Endothelial cell of umbilical vein (primary cell): ENCODE measurements at regions of chr10 and their contacts with region 1.

Region 1: DNA sequence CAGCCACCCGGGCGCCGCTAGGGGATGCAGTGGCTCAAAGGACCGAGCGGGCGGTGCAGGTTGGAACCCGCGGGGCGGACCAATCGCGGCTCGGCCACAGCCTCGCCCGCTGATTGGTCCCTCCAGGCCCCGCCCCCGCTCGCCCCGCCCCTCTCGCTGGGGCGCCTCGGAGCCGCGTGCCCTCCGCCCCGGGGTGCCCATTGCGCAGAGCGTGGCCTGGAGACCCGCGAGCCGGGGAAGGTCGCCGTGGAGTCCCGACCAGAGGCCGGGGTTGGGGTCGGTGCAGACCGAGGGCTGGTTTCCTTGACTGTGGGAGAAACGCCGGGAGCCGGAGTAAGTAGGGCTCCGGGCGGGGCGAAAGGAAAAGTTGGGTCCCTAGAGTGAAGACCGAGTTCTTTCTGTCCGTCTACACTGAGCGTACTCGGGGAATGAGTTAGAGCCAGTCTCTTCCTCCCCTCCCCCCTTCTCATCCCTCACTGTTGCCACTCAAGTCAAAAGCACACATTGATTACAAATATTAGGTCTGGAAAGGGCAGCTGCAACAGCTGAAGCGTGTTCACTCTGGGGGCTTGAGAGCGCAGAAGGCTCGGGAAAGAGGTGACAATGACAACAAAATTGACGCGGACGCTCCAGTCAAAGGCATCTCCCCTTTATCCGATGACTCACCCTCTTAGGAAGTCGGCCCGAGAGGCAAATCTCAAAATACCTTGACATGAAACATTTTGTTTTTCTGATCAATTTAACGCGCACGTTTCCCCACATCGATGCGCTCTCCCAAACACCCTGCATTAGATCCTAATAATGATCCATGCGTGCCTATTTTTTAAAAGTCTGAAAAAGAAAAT is 820 bp upstream of the GATA3 start:
- DNase-seq: peak; percentile 87
- H3K4me3 ChIP-seq: peak overlapping the region; percentile 9 to 95 (median 72)
- H3K27ac ChIP-seq: peak overlapping the region; percentile 96
- H3K4me1 ChIP-seq: peaks cover 29% of the 10 kb centered on the region
- H3K27me3 ChIP-seq: no peaks in the 10 kb centered on the region
- CTCF ChIP-seq: peak; percentile 71 to 95
- POLR2A ChIP-seq: peak; percentile 53

Region 2: GRCh38 chr10:7525314-7526016 is 528.2 kb before region 1 on chr10:
- CTCF ChIA-PET with region 1: no interaction called
- POLR2A ChIA-PET with region 1: no interaction called
- dilution Hi-C with region 1: no loop called
- intact Hi-C with region 1: loop called (anchors 10 kb)
- DNase-seq: peak; percentile 62
- H3K4me3 ChIP-seq: no peak overlapping the region
- H3K27ac ChIP-seq: no peak overlapping the region
- H3K4me1 ChIP-seq: no peaks in the 10 kb centered on the region
- H3K27me3 ChIP-seq: no peaks in the 10 kb centered on the region
- CTCF ChIP-seq: peak; percentile 54 to 59
- POLR2A ChIP-seq: no peak

Region 3: DNA sequence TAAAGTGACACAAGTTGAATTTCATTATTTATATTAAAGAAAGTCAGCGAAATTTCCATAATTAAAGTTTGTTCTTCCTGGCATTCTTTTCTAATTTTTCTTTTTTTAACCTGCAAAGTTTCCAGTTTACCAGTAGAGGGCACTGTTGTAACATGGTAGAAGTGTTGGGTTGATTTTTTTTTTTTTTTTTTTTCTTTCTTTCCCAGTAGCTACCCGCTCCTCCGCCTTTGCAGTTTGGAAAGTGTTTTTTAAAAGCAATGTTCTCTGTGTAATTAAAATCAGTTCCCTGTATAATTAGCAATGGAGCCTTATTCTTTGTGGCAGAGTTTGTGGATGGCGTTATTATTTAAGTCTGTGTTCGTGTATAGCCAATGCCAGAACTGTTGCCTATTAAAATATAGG is 181.6 kb before region 1 on chr10:
- CTCF ChIA-PET with region 1: interaction called, 9 read pairs
- POLR2A ChIA-PET with region 1: no interaction called
- dilution Hi-C with region 1: no loop called
- intact Hi-C with region 1: loop called (anchors 1 kb)
- DNase-seq: peak; percentile 68
- H3K4me3 ChIP-seq: peak overlapping the region; percentile 26 to 78 (median 32)
- H3K27ac ChIP-seq: no peak overlapping the region
- H3K4me1 ChIP-seq: peaks cover 13% of the 10 kb centered on the region
- H3K27me3 ChIP-seq: no peaks in the 10 kb centered on the region
- CTCF ChIP-seq: peak; percentile 43 to 46
- POLR2A ChIP-seq: no peak

Region 4: DNA sequence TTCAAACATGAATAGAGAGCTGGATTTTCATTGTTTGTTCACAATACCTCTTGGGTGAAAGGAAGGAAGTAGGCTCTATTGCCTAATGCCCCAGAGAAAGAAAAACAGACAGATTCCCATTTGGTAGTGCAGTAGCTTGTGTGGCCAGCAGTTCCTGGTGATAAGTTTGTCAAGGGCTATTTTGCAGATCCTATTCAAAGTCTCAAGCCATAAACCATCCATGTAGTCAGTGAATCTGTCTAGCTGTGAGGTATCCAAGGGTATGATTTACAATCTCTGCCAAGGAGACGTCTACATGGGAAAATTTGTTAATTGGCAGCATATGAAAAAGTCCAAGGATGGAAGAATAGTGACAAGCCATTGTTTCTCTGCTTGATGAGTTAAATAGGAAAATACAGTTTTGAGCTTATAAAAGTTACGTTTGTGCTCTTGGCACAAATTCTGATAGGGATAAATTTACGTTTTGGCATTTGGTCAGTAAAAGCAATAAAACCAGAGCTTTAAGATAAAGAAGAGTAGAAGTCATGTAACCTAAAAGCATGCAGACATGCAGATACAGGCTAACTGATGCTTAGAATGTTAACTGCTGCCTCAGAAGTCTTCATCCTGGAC is 269.9 kb after region 1 on chr10:
- CTCF ChIA-PET with region 1: no interaction called
- POLR2A ChIA-PET with region 1: no interaction called
- dilution Hi-C with region 1: no loop called
- intact Hi-C with region 1: loop called (anchors 1 kb)
- DNase-seq: peak; percentile 71
- H3K4me3 ChIP-seq: no peak overlapping the region
- H3K27ac ChIP-seq: no peak overlapping the region
- H3K4me1 ChIP-seq: peaks cover 10% of the 10 kb centered on the region
- H3K27me3 ChIP-seq: peaks cover 0 to 3% of the 10 kb centered on the region in 2 experiments
- CTCF ChIP-seq: no peak
- POLR2A ChIP-seq: no peak

Region 5: GRCh38 chr10:8829588-8829987 is 775.9 kb after region 1 on chr10:
- CTCF ChIA-PET with region 1: no interaction called
- POLR2A ChIA-PET with region 1: no interaction called
- dilution Hi-C with region 1: no loop called
- intact Hi-C with region 1: loop called (anchors 2 kb)
- DNase-seq: no peak
- H3K4me3 ChIP-seq: no peak overlapping the region
- H3K27ac ChIP-seq: no peak overlapping the region
- H3K4me1 ChIP-seq: peaks cover 2% of the 10 kb centered on the region
- H3K27me3 ChIP-seq: no peaks in the 10 kb centered on the region
- CTCF ChIP-seq: no peak
- POLR2A ChIP-seq: no peak

Region 6: GRCh38 chr10:9075422-9075821 is 1021.8 kb after region 1 on chr10:
- CTCF ChIA-PET with region 1: interaction called, 3 read pairs
- POLR2A ChIA-PET with region 1: no interaction called
- dilution Hi-C with region 1: no loop called
- intact Hi-C with region 1: loop called (anchors 10 kb)
- DNase-seq: peak; percentile 28
- H3K4me3 ChIP-seq: no peak overlapping the region
- H3K27ac ChIP-seq: no peak overlapping the region
- H3K4me1 ChIP-seq: no peaks in the 10 kb centered on the region
- H3K27me3 ChIP-seq: no peaks in the 10 kb centered on the region
- CTCF ChIP-seq: no peak
- POLR2A ChIP-seq: no peak

Region 7: DNA sequence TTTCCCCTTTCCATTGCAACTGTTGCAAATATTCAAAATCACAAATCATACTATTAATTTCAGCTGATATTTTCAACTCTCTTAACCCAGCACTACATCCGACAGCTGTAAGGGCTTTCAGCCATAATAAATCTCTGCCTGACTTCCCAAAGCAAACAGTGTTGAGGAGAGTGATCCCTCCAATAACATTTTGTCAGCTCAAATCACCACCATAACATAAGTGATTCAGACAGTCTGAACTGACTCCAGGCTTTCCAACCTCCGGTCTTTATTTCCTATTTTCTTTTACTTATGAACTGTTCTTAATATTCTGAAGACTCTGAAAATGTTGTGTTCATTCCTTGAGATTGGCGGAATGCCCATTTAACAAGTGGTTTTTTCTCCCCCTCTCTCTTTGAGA is 1086.7 kb after region 1 on chr10:
- CTCF ChIA-PET with region 1: no interaction called
- POLR2A ChIA-PET with region 1: no interaction called
- dilution Hi-C with region 1: no loop called
- intact Hi-C with region 1: no loop called
- DNase-seq: peak; percentile 89
- H3K4me3 ChIP-seq: no peak overlapping the region
- H3K27ac ChIP-seq: no peak overlapping the region
- H3K4me1 ChIP-seq: no peaks in the 10 kb centered on the region
- H3K27me3 ChIP-seq: no peaks in the 10 kb centered on the region
- CTCF ChIP-seq: no peak
- POLR2A ChIP-seq: no peak